MCF 10A (cell line): ENCODE measurements at regions of chr2 and their contacts with region 1.

Region 1: DNA sequence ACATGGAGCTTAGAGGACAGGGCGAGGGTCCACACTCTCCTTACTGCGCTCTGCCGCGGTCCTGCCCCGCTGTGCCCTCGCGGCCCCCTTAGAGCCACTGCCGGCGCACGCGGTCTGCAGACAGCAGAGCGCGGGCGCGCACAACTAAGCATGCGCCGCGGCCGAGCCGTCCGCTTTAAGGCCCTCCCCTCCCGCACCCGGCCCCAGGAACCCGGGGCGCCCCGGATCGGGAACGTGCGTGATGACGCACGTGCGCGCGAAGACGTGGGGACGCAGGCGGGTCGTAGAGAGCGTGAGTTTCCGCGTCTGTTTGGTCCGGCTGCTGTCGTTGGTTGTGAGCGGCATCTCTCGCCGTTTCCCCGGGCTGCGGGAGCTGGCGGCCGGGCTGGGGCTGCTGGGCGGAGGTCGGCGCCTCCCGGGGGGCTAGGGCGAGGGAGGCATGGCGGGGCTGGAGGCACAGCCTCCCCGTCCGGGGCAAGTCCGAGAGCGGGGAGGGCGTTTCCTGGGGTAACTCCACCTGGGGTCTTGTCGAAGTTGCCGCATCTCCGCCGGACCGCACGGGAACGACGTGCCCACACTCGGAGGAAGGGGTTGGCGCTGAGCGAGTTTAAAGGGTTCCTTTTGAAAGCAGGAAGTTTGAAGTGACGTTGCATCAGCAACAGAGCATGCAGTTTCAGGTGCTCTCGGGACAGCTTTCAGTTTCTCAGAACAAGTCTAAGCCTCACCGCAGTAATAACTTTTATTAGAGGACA is at the start of gene RHBDD1:
- DNase-seq: peak; percentile 96
- H3K4me3 Mint-ChIP-seq: peak within 1 kb of the TSS; percentile 91
- H3K27ac Mint-ChIP-seq: peak within 1 kb of the TSS; percentile 98
- H3K4me1 Mint-ChIP-seq: peaks cover 11% of the 10 kb centered on the region
- H3K27me3 Mint-ChIP-seq: no peaks in the 10 kb centered on the region
- CTCF ChIP-seq: no peak
- total RNA-seq, gene RHBDD1: 75.2 and 76.0 TPM in 2 replicates

Region 2: DNA sequence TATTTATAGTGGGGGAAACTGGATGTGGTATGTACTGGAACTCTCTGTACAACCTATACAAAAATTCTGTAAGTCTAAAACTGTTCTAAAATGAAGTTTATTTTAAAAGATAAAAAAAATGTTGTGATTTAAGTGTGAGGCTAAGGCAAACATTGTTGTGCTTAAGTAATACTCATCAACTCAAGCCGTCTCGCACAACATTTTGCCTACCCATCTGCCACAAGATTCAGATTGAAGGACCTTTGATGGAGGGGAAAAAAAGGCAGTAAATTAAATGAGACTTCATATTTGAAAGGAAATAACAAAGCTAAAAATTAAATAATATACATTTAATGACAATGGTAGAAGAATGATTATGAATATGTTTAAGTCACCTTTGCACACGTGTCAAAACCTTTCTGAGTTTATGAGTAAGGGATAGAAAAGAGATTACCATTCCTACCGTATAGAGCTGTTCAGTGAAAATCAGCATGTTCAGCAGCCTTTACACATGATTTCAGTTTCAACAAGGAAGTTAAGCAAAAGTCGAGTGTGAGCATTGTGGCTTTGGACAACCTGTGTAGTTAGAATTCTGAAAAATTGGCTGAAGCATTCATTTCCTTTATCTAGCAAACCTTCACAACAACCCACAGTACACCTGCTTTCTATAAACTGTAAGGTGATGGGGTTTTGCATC is 535.6 kb before region 1 on chr2:
- CTCF ChIA-PET with region 1: no interaction called
- POLR2A ChIA-PET with region 1: no interaction called
- intact Hi-C with region 1: no loop called
- DNase-seq: no peak
- H3K4me3 Mint-ChIP-seq: no peak overlapping the region
- H3K27ac Mint-ChIP-seq: no peak overlapping the region
- H3K4me1 Mint-ChIP-seq: no peaks in the 10 kb centered on the region
- H3K27me3 Mint-ChIP-seq: no peaks in the 10 kb centered on the region
- CTCF ChIP-seq: no peak

Region 3: DNA sequence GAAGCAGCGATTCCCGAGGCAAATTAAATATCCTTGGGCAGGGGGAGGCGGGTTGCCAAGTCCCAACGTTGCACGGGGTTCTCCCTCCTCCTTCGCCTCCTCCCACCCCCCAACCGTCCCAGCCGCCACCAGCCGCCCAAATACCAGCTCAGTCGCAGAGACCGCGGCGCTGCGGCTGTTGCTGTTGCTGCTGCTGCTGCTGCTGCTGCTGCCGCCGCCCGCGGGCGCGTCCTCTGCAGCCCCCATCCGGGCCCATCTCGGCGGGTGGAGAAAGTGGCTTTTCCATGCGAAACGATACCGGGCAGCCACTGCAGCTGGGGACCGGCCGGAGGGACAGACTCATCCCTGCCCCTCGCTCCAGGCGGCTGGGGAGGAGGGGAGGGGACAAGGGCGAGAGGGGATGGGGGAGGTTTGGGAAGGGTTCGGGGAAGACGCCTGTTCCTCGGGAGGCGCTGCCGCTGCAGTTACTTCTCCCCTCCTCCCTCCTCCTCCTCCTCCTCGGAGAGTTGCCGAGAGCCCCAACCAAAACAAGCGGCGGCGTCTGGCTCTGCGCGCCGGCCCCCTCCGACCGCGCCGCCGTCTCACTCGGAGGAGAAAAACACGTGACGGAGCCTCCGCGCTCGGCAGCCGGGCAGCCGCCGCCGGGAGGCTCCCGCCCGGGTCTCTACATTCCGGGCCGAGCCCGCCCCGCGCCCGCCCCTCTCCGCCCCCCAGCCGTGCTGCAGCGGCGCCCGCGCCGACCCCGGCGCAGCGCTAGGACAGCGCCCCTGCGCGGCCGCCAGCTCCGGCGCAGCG is 36.6 kb before region 1 on chr2 and contains the start of gene IRS1:
- CTCF ChIA-PET with region 1: interaction called, 5 read pairs
- POLR2A ChIA-PET with region 1: interaction called, 10 read pairs
- intact Hi-C with region 1: no loop called
- DNase-seq: peak; percentile 55
- H3K4me3 Mint-ChIP-seq: peak within 1 kb of the TSS; percentile 73
- H3K27ac Mint-ChIP-seq: no peak within 1 kb of the TSS
- H3K4me1 Mint-ChIP-seq: peaks cover 24% of the 10 kb centered on the region
- H3K27me3 Mint-ChIP-seq: no peaks in the 10 kb centered on the region
- CTCF ChIP-seq: peak; percentile 35
- total RNA-seq, gene IRS1: 6.1 and 10.5 TPM in 2 replicates

Region 4: DNA sequence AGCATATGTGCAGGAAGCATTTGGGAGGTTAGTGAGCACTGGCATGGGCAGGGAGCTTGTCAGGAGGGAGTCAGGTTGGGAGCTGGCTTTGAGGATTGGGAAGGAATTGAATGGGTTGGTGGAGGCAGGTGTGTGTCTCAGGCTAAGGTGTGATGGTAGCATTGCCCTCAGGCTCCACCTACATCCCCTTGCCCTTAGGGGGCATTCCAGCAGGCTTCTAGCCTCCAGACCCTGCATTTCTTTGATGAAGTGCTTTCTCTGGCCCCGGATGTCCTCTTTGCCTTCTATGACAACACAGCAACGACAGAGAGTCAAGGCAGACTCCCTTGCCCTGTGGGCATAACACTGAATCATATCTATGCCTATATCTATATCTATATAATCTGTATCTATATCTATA is 13.4 kb after region 1 on chr2:
- CTCF ChIA-PET with region 1: interaction called, 3 read pairs
- POLR2A ChIA-PET with region 1: interaction called, 17 read pairs
- intact Hi-C with region 1: no loop called
- DNase-seq: no peak
- H3K4me3 Mint-ChIP-seq: no peak overlapping the region
- H3K27ac Mint-ChIP-seq: peak overlapping the region; percentile 52
- H3K4me1 Mint-ChIP-seq: no peaks in the 10 kb centered on the region
- H3K27me3 Mint-ChIP-seq: no peaks in the 10 kb centered on the region
- CTCF ChIP-seq: no peak

Region 5: GRCh38 chr2:226916669-226917068 is 80.7 kb after region 1 on chr2:
- CTCF ChIA-PET with region 1: interaction called, 3 read pairs
- POLR2A ChIA-PET with region 1: interaction called, 31 read pairs
- intact Hi-C with region 1: loop called (anchors 5 kb)
- DNase-seq: no peak
- H3K4me3 Mint-ChIP-seq: no peak overlapping the region
- H3K27ac Mint-ChIP-seq: peak overlapping the region; percentile 97
- H3K4me1 Mint-ChIP-seq: peaks cover 28% of the 10 kb centered on the region
- H3K27me3 Mint-ChIP-seq: no peaks in the 10 kb centered on the region
- CTCF ChIP-seq: no peak

Region 6: GRCh38 chr2:226984750-226985582 is 149.0 kb after region 1 on chr2:
- CTCF ChIA-PET with region 1: interaction called, 5 read pairs
- POLR2A ChIA-PET with region 1: interaction called, 12 read pairs
- intact Hi-C with region 1: no loop called
- DNase-seq: peak; percentile 61
- H3K4me3 Mint-ChIP-seq: no peak overlapping the region
- H3K27ac Mint-ChIP-seq: no peak overlapping the region
- H3K4me1 Mint-ChIP-seq: peaks cover 15% of the 10 kb centered on the region
- H3K27me3 Mint-ChIP-seq: no peaks in the 10 kb centered on the region
- CTCF ChIP-seq: peak; percentile 61